GM12878 (cell line): ENCODE measurements at regions of chr18 and their contacts with region 1.

Region 1: DNA sequence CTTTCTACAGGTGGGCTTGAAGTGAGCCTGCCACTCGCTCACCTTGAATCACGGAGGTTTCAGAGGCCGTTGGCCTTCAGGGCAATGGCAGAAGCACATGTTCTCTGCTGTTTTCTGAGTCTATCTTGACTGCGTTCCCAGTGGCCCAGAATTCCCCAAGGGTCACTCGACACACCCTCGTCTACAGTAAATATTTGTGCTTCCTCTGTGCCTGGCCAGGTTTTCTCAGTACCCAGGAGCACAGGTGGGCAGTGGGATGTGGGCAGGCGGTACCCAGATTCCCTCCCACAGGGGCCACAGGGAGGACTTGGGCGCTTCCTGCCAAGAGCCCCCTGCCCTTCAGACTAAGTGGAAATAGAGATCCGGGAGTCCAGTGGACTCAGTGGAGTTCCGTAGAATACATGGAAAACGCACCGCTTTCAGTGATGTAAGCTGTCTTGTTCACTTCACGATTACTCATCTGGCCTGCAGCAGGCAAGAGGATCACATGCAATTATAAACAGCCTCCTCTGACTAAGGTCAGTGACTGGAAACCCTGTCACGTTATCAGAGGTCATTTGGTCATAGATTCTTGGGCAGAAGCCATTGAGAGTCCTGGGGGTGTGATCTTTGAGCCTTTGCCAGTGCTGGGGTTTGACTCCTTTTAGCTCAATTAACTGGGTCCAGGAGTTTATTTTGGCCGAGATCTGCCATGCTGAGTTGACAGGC is 179.8 kb downstream of the NEDD4L start:
- DNase-seq: no peak
- ATAC-seq: peak; percentile 47
- H3K4me3 ChIP-seq: no peak overlapping the region
- H3K27ac ChIP-seq: no peak overlapping the region
- H3K4me1 ChIP-seq: peaks cover 13% of the 10 kb centered on the region
- H3K27me3 ChIP-seq: no peaks in the 10 kb centered on the region
- CTCF ChIP-seq: no peak
- EP300 ChIP-seq: no peak
- POLR2A ChIP-seq: no peak
- RAD21 ChIP-seq: no peak

Region 2: DNA sequence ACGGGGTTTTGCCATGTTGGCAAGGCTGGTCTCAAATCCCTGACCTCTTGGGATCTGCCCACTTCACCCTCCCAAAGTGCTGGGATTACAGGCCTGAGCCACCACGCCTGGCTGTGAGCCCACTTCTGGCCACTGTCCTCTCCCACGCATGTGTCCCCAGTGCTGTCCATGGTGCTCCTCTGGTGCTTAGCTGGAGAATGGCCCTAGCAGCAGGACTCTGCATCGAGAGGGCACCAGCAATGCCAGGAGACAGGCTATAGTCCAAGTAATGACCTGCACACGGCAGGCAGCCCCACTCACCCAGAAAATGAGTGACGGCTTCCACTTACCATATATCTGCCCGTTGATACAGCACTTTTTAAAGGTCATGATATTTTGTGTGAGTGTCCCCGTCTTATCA is 535.9 kb before region 1 on chr18:
- CTCF ChIA-PET with region 1: no interaction called
- POLR2A ChIA-PET with region 1: no interaction called
- RAD21 ChIA-PET with region 1: no interaction called
- SMC1A ChIA-PET with region 1: no interaction called
- in situ Hi-C with region 1: no loop called
- intact Hi-C with region 1: no loop called
- DNase-seq: no peak
- ATAC-seq: no peak
- H3K4me3 ChIP-seq: no peak overlapping the region
- H3K27ac ChIP-seq: no peak overlapping the region
- H3K4me1 ChIP-seq: no peaks in the 10 kb centered on the region
- H3K27me3 ChIP-seq: no peaks in the 10 kb centered on the region
- CTCF ChIP-seq: no peak
- EP300 ChIP-seq: no peak
- POLR2A ChIP-seq: no peak
- RAD21 ChIP-seq: no peak

Region 3: GRCh38 chr18:57970356-57971080 is 253.4 kb before region 1 on chr18:
- CTCF ChIA-PET with region 1: no interaction called
- POLR2A ChIA-PET with region 1: no interaction called
- RAD21 ChIA-PET with region 1: no interaction called
- SMC1A ChIA-PET with region 1: no interaction called
- in situ Hi-C with region 1: no loop called
- intact Hi-C with region 1: no loop called
- DNase-seq: no peak
- ATAC-seq: 0 out of 3 replicates have a peak, but pooled peaks have one; percentile 44
- H3K4me3 ChIP-seq: no peak overlapping the region
- H3K27ac ChIP-seq: no peak overlapping the region
- H3K4me1 ChIP-seq: no peaks in the 10 kb centered on the region
- H3K27me3 ChIP-seq: no peaks in the 10 kb centered on the region
- CTCF ChIP-seq: peak; percentile 22 to 39 (median 23); a peak in 5 of 6 replicates
- EP300 ChIP-seq: no peak
- POLR2A ChIP-seq: no peak
- RAD21 ChIP-seq: no peak

Region 4: DNA sequence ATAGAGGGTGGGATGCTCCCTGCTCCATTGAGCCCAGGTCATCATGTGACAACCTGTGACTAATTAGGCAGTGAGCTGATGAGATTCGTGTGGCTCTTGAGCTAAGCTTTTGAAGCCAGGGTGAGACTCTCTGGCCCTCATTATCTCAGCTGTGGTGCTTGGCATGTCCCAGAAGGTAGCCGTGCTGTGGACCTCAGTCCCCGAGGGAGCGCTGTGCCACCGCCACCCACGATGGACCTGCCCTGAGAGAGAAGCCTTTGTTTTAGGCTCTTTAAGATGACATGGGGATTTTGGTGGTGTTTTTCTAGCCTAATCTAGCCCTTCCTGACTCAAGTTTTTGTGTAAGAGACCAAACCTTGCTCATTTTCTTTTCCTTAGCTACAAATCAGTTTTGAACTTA is 113.5 kb before region 1 on chr18:
- CTCF ChIA-PET with region 1: no interaction called
- POLR2A ChIA-PET with region 1: interaction called, 3 read pairs
- RAD21 ChIA-PET with region 1: interaction called, 10 read pairs
- SMC1A ChIA-PET with region 1: interaction called, 4 read pairs
- in situ Hi-C with region 1: no loop called
- intact Hi-C with region 1: no loop called
- DNase-seq: peak; percentile 61
- ATAC-seq: peak; percentile 85
- H3K4me3 ChIP-seq: no peak overlapping the region
- H3K27ac ChIP-seq: peak overlapping the region; percentile 9; the same call in 1 of the 2 replicates
- H3K4me1 ChIP-seq: peaks cover 12% of the 10 kb centered on the region
- H3K27me3 ChIP-seq: no peaks in the 10 kb centered on the region
- CTCF ChIP-seq: no peak
- EP300 ChIP-seq: 0 out of 4 replicates have a peak, but pooled peaks of 1 of the 2 experiments have one; percentile 11
- POLR2A ChIP-seq: no peak
- RAD21 ChIP-seq: no peak

Region 5: GRCh38 chr18:58195278-58195765 is 28.5 kb before region 1 on chr18:
- CTCF ChIA-PET with region 1: interaction called, 11 read pairs
- POLR2A ChIA-PET with region 1: interaction called, 15 read pairs
- RAD21 ChIA-PET with region 1: interaction called, 70 read pairs
- SMC1A ChIA-PET with region 1: interaction called, 114 read pairs
- in situ Hi-C with region 1: no loop called
- intact Hi-C with region 1: no loop called
- DNase-seq: no peak
- ATAC-seq: peak; percentile 83
- H3K4me3 ChIP-seq: peak overlapping the region; percentile 64
- H3K27ac ChIP-seq: no peak overlapping the region
- H3K4me1 ChIP-seq: no peaks in the 10 kb centered on the region
- H3K27me3 ChIP-seq: no peaks in the 10 kb centered on the region
- CTCF ChIP-seq: no peak
- EP300 ChIP-seq: no peak
- POLR2A ChIP-seq: no peak
- RAD21 ChIP-seq: no peak

Region 6: GRCh38 chr18:58202406-58202730 is 21.5 kb before region 1 on chr18:
- CTCF ChIA-PET with region 1: interaction called, 4 read pairs
- POLR2A ChIA-PET with region 1: interaction called, 10 read pairs
- RAD21 ChIA-PET with region 1: interaction called, 70 read pairs
- SMC1A ChIA-PET with region 1: interaction called, 114 read pairs
- in situ Hi-C with region 1: no loop called
- intact Hi-C with region 1: no loop called
- DNase-seq: no peak
- ATAC-seq: no peak
- H3K4me3 ChIP-seq: no peak overlapping the region
- H3K27ac ChIP-seq: no peak overlapping the region
- H3K4me1 ChIP-seq: no peaks in the 10 kb centered on the region
- H3K27me3 ChIP-seq: no peaks in the 10 kb centered on the region
- CTCF ChIP-seq: no peak
- EP300 ChIP-seq: no peak
- POLR2A ChIP-seq: no peak
- RAD21 ChIP-seq: no peak

Region 7: DNA sequence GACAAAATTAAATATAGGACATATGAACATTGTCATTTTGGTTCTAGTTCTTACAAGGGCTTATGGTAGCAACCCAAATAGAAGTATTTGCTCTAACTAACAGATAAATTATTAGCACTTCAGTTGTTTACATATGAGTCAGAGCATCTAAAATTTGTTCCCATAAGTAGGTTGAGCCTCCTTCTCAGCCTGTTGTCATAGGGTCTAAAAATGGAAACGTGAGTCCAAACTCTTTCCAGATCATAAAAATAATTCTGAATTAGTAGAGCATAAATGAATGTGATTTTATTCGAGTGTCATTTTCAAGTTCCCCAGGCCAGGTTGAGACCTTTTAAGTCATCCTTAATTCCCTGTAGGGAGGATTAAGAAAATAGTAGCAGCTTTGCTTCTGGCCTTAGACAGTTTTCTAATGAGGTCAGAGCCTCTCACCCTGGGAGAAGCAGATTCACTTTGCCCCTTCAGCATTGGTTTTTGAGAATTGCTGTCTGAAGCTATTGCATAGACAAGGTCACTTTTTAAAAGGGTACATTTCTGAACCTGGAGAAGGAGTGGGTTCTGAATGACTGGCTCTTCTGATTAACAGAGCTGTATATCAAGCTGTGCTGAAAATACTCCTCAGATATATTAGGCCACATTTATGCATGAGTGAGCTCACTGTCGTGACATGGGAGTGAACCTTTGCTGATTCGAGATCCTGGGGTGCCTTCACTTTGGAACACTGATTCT is 15.5 kb before region 1 on chr18:
- CTCF ChIA-PET with region 1: interaction called, 12 read pairs
- POLR2A ChIA-PET with region 1: interaction called, 46 read pairs
- RAD21 ChIA-PET with region 1: interaction called, 45 read pairs
- SMC1A ChIA-PET with region 1: interaction called, 66 read pairs
- in situ Hi-C with region 1: no loop called
- intact Hi-C with region 1: loop called (anchors 2 kb)
- DNase-seq: no peak
- ATAC-seq: peak; percentile 52
- H3K4me3 ChIP-seq: no peak overlapping the region
- H3K27ac ChIP-seq: no peak overlapping the region
- H3K4me1 ChIP-seq: peaks cover 3% of the 10 kb centered on the region; the same call in 1 of the 2 replicates
- H3K27me3 ChIP-seq: no peaks in the 10 kb centered on the region
- CTCF ChIP-seq: no peak
- EP300 ChIP-seq: no peak
- POLR2A ChIP-seq: no peak
- RAD21 ChIP-seq: no peak

Region 8: DNA sequence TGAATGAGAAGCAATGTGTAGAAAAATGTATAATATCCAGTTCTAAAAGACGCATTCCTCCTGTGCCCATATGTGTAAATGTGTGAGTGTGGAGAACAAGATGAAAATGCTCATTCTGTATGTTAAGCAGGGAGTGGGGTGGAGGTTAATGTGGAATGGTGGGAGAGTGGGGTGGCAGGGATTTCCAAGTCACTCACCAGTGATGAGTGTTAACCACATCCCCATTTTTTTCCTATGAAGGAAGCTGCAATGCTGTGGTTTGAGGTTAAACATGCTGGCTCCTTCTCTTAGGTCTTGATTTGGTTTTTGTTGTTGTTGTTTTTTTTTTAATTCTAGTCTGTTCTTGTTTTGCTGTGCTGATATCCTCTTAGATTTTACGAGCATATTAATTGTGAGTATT is 10.4 kb before region 1 on chr18:
- CTCF ChIA-PET with region 1: interaction called, 12 read pairs
- POLR2A ChIA-PET with region 1: interaction called, 46 read pairs
- RAD21 ChIA-PET with region 1: interaction called, 45 read pairs
- SMC1A ChIA-PET with region 1: interaction called, 66 read pairs
- in situ Hi-C with region 1: no loop called
- intact Hi-C with region 1: loop called (anchors 2 kb)
- DNase-seq: no peak
- ATAC-seq: peak; percentile 8
- H3K4me3 ChIP-seq: no peak overlapping the region
- H3K27ac ChIP-seq: no peak overlapping the region
- H3K4me1 ChIP-seq: peaks cover 12% of the 10 kb centered on the region; the same call in 1 of the 2 replicates
- H3K27me3 ChIP-seq: no peaks in the 10 kb centered on the region
- CTCF ChIP-seq: no peak
- EP300 ChIP-seq: no peak
- POLR2A ChIP-seq: no peak
- RAD21 ChIP-seq: no peak

Region 9: DNA sequence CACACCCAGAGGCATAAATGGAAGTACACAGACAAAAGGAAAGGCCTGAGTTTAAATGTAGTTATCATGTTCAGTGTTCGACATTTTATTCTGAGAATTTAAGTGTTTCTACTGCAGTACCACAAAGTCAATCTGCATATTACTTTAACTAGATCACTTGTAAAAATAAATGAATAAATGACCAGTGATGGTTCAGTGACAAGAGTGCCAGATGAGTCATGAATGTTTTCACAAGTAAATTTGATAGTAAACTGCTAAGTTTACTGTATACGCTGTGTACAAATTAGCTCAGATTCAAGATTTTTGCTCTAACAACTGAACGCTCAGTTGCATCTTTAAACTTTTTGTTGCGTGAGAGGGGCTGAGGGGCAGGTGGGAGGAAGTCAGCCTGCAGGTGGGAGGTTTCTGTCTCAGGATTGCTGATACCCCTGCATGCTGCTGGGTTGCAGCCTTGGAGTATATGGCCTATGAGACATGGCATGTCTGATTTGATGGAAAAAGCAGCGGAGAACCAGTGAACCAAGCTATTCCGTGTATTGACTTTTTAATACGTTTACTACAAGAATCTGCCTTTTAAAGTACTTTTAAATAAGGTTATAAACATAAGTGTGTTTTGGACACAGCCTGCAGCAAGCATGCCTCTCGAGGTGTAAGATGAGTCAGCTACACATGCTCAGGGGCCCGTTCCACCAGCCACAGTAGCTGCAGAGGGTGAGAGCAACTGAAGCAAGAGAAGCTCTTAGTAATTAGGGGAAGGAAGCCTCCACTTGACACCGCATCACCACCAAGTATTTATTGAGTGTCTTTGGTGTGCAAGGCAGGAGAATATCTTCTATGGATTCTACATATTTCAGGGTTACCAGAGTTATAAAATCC is 65.3 kb after region 1 on chr18:
- CTCF ChIA-PET with region 1: no interaction called
- POLR2A ChIA-PET with region 1: interaction called, 10 read pairs
- RAD21 ChIA-PET with region 1: interaction called, 5 read pairs
- SMC1A ChIA-PET with region 1: interaction called, 3 read pairs
- in situ Hi-C with region 1: no loop called
- intact Hi-C with region 1: no loop called
- DNase-seq: no peak
- ATAC-seq: peak; percentile 90
- H3K4me3 ChIP-seq: no peak overlapping the region
- H3K27ac ChIP-seq: no peak overlapping the region
- H3K4me1 ChIP-seq: peaks cover 12% of the 10 kb centered on the region; the same call in 1 of the 2 replicates
- H3K27me3 ChIP-seq: no peaks in the 10 kb centered on the region
- CTCF ChIP-seq: no peak
- EP300 ChIP-seq: no peak
- POLR2A ChIP-seq: no peak
- RAD21 ChIP-seq: no peak